ENCODE measurements at regions of chr11 and their contacts with region 1.

Region 1: GRCh38 chr11:60831143-60831500 is 10.8 kb upstream of the CCDC86 start:
- DNase-seq: peak; percentile 69
- ATAC-seq: peak; percentile 95
- H3K4me3 Mint-ChIP-seq: no peak overlapping the region
- H3K27ac Mint-ChIP-seq: no peak overlapping the region
- H3K4me1 Mint-ChIP-seq: peaks cover 5% of the 10 kb centered on the region
- H3K27me3 Mint-ChIP-seq: peaks cover 8% of the 10 kb centered on the region
- CTCF ChIP-seq: peak; percentile 54

Region 2: DNA sequence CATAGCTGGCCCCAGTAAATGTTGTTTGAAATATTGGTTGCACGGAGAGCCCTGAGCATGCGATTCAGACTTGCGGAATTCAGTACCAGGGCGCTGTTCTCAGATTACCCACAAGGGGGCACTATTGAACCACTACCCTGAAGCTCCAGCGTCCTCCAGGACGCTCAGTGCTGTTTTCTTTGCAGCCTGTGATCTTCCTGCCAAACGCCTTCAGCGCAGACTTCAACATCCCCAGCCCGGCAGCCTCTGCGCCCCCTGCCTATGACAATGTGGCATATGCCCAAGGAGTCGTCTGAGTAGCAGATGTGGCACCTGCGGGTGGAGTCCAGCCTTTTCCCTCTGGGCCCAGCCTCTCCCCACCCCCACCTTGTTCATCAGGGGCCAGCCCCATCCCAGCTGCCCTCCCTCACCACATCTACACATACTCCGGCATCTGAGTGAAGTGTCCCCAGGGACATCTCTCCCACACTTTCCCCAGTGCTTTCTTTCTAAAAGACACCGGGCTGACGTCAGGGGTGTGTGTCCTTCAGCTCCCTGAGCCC is 55.6 kb before region 1 on chr11:
- CTCF ChIA-PET with region 1: interaction called, 4 read pairs
- POLR2A ChIA-PET with region 1: no interaction called
- intact Hi-C with region 1: loop called (anchors 5 kb)
- DNase-seq: peak; percentile 64
- ATAC-seq: peak; percentile 94
- H3K4me3 Mint-ChIP-seq: no peak overlapping the region
- H3K27ac Mint-ChIP-seq: no peak overlapping the region
- H3K4me1 Mint-ChIP-seq: peaks cover 11% of the 10 kb centered on the region
- H3K27me3 Mint-ChIP-seq: peaks cover 10% of the 10 kb centered on the region
- CTCF ChIP-seq: peak; percentile 44

Region 3: DNA sequence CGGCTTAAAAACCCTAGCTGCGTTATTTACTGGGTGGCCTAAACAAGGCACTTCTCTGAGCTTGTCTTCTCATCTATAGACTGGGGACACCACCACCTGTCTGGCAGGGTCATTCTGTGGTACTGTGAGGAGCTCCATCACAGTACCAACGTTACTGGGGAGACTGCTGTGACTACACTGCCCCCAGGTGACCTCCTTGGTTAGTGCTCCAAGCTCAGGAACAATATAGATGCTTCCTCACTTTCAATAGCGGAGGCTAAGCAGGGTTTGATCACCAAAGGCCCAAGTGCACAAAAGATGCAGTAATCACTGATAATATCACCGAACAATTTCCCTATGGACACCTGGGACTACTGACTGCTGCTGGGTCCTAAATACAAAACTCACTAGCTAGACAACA is 56.4 kb after region 1 on chr11:
- CTCF ChIA-PET with region 1: interaction called, 47 read pairs
- POLR2A ChIA-PET with region 1: interaction called, 6 read pairs
- intact Hi-C with region 1: loop called (anchors 1 kb)
- DNase-seq: no peak
- ATAC-seq: no peak
- H3K4me3 Mint-ChIP-seq: no peak overlapping the region
- H3K27ac Mint-ChIP-seq: no peak overlapping the region
- H3K4me1 Mint-ChIP-seq: no peaks in the 10 kb centered on the region
- H3K27me3 Mint-ChIP-seq: no peaks in the 10 kb centered on the region
- CTCF ChIP-seq: no peak

Region 4: GRCh38 chr11:60970369-60970774 is 139.2 kb after region 1 on chr11:
- CTCF ChIA-PET with region 1: interaction called, 17 read pairs
- POLR2A ChIA-PET with region 1: no interaction called
- intact Hi-C with region 1: loop called (anchors 1 kb)
- DNase-seq: peak; percentile 68
- ATAC-seq: peak; percentile 91
- H3K4me3 Mint-ChIP-seq: no peak overlapping the region
- H3K27ac Mint-ChIP-seq: peak overlapping the region; percentile 32
- H3K4me1 Mint-ChIP-seq: peaks cover 31% of the 10 kb centered on the region
- H3K27me3 Mint-ChIP-seq: no peaks in the 10 kb centered on the region
- CTCF ChIP-seq: peak; percentile 88

Region 5: GRCh38 chr11:61173456-61173855 is 342.3 kb after region 1 on chr11:
- CTCF ChIA-PET with region 1: interaction called, 8 read pairs
- POLR2A ChIA-PET with region 1: no interaction called
- intact Hi-C with region 1: loop called (anchors 5 kb)
- DNase-seq: no peak
- ATAC-seq: no peak
- H3K4me3 Mint-ChIP-seq: no peak overlapping the region
- H3K27ac Mint-ChIP-seq: no peak overlapping the region
- H3K4me1 Mint-ChIP-seq: peaks cover 18% of the 10 kb centered on the region
- H3K27me3 Mint-ChIP-seq: peaks cover 2% of the 10 kb centered on the region
- CTCF ChIP-seq: no peak

Region 6: DNA sequence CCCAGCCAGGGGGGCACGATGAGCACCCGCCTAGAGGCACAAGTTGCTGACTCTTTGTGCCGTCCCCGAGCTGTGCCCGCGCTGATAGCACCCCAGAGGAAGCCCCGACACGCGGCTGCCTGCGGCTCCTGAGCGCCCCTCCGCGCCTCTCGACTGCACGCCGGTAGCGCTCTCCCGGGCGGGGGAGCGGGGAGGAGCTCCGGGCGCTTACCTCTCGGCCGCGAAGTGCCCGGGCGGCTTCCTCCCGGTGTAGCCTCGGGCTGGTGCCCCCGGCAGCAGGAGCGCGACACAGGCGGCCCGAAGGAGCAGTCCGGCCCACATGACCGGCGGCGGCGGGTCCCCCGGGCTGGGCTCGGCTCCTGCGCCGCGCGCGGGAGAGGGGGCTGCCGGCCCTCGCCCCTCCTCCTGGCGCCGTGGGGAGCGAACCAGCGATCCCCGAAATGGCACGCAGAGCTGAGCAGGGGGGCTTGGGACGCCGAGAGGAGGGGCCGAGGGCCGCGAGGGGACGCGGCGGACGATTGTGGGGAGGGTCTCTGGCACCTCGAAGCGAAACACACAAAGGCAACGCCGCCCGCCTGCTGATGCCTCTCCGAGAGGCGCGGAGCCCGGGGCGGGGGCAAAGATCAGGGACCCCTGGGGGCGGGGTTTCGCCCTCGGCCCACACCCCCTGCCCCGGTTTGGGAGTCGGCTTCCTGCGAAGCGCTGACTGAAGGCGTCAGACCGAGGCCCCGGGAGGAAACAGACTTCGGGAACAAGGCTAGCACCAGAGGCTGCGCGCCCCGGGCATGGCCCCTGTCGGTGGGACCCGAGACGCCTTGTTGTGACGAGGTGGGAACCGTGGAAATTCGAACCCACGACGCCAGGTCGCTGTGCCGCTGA is 463.8 kb after region 1 on chr11 and contains the start of gene VWCE:
- CTCF ChIA-PET with region 1: interaction called, 6 read pairs
- POLR2A ChIA-PET with region 1: no interaction called
- intact Hi-C with region 1: loop called (anchors 1 kb)
- DNase-seq: peak; percentile 67
- ATAC-seq: peak; percentile 86
- H3K4me3 Mint-ChIP-seq: peak within 1 kb of the TSS; percentile 81
- H3K27ac Mint-ChIP-seq: no peak within 1 kb of the TSS
- H3K4me1 Mint-ChIP-seq: peaks cover 9% of the 10 kb centered on the region
- H3K27me3 Mint-ChIP-seq: peaks cover 10% of the 10 kb centered on the region
- CTCF ChIP-seq: no peak
- total RNA-seq, gene VWCE: 0.76 and 1.3 TPM in 2 replicates

Region 7: DNA sequence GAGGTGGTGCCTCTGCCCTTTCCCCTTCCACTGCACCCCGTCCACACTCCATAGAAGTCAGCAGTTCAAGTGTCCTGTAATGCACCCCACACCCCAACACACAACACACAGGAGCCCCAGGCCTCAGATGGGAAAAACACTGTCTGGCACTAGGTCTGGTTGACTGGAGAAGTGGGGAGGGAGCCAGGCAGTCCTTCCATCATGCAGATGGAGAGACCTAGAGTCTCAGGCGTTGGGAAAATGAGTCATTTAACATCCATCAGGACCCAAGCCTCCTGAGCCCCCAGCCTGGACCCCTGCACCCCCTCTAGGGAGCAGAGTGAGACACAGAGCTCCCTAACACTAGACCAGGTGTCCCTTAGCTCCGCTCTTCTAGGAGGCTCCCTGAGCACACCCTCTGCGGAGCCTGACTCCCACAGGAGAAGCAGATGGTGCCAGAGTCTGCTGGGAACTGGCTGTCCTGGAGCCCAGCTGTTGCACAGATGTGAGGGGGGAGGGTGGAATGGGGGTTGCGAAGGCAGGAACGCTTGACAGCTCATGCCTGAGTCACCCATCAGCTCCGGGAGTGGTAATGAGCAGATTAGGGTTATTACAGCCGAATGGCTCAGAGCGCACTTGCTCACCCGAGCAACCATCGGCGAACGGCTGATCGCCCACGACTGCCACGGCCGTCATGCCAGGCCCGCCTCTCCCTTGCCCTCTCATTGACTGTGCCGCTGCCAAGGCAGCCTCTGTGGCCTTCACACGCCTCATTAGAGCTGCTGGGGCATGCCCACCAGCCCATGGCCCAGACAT is 771.9 kb after region 1 on chr11:
- CTCF ChIA-PET with region 1: no interaction called
- POLR2A ChIA-PET with region 1: no interaction called
- intact Hi-C with region 1: no loop called
- DNase-seq: no peak
- ATAC-seq: no peak
- H3K4me3 Mint-ChIP-seq: no peak overlapping the region
- H3K27ac Mint-ChIP-seq: no peak overlapping the region
- H3K4me1 Mint-ChIP-seq: no peaks in the 10 kb centered on the region
- H3K27me3 Mint-ChIP-seq: peaks cover 7% of the 10 kb centered on the region
- CTCF ChIP-seq: no peak

Measured in activated B cell treated with CpG ODN at 0.5 μM for 24 hours (primary cell).